Activated T-helper 1 cell treated with anti-CD3 and anti-CD28 coated beads, Interleukin-12 subunit alpha, Interleukin-12 subunit beta, Interleukin-2, Interleukin-4 antibody, amounts not matched to agents 30 ng/mL and 10 ng/mL and 1 ng/mL, durations not matched to agents 14 hours and 24 hours and 36 hours (primary cell): ENCODE measurements at regions of chr9 and their contacts with region 1.

Region 1: GRCh38 chr9:94839398-94839797 is 112.9 kb downstream of the AOPEP start:
- DNase-seq: no peak
- H3K4me3 Mint-ChIP-seq: no peak overlapping the region
- H3K27ac Mint-ChIP-seq: peak overlapping the region; percentile 24
- H3K4me1 Mint-ChIP-seq: peaks cover 28% of the 10 kb centered on the region
- H3K27me3 Mint-ChIP-seq: peaks cover 2% of the 10 kb centered on the region

Region 2: GRCh38 chr9:94767331-94768072 is 71.9 kb before region 1 on chr9:
- intact Hi-C with region 1: no loop called
- DNase-seq: no peak
- H3K4me3 Mint-ChIP-seq: no peak overlapping the region
- H3K27ac Mint-ChIP-seq: no peak overlapping the region
- H3K4me1 Mint-ChIP-seq: no peaks in the 10 kb centered on the region
- H3K27me3 Mint-ChIP-seq: no peaks in the 10 kb centered on the region

Region 3: GRCh38 chr9:94802793-94803192 is 36.6 kb before region 1 on chr9:
- intact Hi-C with region 1: loop called (anchors 1 kb)
- DNase-seq: peak; percentile 4
- H3K4me3 Mint-ChIP-seq: peak overlapping the region; percentile 28
- H3K27ac Mint-ChIP-seq: peak overlapping the region; percentile 66
- H3K4me1 Mint-ChIP-seq: peaks cover 40% of the 10 kb centered on the region
- H3K27me3 Mint-ChIP-seq: no peaks in the 10 kb centered on the region

Region 4: DNA sequence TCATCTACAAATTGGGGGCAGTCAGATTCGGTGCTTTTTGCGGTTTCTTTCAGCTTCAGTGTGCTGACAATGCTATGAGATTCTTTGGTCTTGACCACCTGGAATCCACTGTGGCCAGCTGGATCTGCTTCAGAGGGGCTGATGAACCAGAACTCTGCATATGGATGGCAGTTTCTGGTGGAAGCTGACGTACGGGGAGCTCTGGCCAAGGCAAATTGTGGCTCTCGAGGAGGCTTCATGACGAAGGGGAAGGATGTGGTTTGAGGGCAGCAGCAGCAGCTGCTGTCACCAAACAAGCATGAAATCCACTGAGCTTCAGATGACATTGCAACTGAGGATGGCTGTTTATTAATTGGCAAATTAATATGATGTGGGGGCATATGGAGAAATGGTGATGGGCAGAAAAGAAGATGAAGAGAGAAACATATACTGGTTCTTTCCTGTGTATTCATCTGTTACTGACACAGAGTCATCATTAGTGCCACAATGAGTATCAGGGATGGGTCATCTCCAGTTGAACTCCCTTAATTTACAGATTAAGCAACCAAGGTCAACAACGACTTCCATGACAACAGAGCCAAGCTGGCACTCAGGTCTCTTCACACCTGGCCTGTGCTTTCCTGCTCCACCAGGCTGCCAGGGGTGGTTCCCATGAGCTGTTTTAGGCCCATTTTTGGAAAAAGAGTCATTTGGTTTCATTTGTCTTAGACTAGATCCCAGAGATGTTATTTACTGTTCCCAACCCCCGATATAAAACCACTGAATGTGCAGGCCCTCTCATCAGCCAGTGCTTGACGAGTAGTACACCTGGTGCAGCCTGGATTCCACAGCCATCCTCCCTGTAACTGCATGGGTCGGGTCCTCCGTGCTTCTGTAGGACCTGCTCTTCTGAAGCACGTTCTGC is 21.8 kb after region 1 on chr9:
- intact Hi-C with region 1: loop called (anchors 1 kb)
- DNase-seq: peak; percentile 70
- H3K4me3 Mint-ChIP-seq: peak overlapping the region; percentile 73
- H3K27ac Mint-ChIP-seq: peak overlapping the region; percentile 83
- H3K4me1 Mint-ChIP-seq: peaks cover 48% of the 10 kb centered on the region
- H3K27me3 Mint-ChIP-seq: no peaks in the 10 kb centered on the region

Region 5: GRCh38 chr9:94870793-94871558 is 31.6 kb after region 1 on chr9:
- intact Hi-C with region 1: loop called (anchors 1 kb)
- DNase-seq: no peak
- H3K4me3 Mint-ChIP-seq: no peak overlapping the region
- H3K27ac Mint-ChIP-seq: peak overlapping the region; percentile 75
- H3K4me1 Mint-ChIP-seq: peaks cover 58% of the 10 kb centered on the region
- H3K27me3 Mint-ChIP-seq: peaks cover 4% of the 10 kb centered on the region

Region 6: DNA sequence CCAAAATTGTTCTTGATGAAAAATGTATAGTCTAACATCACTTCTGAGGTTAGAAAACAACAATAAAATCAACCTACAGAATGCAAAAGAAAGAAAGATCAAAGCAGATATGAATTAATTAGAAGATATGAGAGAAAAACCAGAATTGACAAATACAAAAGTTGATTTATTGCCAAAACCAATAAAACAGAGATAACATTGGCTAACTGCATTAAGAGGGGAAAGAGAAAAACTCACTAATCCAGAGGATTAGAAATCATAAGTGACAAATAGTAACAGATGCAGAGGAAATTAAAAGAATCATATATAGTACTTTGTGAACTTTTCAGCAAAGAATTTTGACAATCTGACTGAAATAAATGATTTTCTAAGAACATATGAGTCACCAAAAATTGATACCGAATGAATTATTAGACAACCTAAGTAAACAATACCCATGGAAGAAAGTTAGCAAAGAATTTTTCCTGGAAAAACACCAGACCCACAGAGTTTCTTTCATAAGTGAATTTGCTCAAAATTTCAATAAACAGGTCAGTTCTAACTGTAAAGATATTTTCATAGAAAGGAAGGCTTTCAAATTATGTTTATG is 54.8 kb after region 1 on chr9:
- intact Hi-C with region 1: loop called (anchors 2 kb)
- DNase-seq: no peak
- H3K4me3 Mint-ChIP-seq: no peak overlapping the region
- H3K27ac Mint-ChIP-seq: no peak overlapping the region
- H3K4me1 Mint-ChIP-seq: peaks cover 20% of the 10 kb centered on the region
- H3K27me3 Mint-ChIP-seq: peaks cover 4% of the 10 kb centered on the region